Sigmoid colon (tissue), 7 donors: ENCODE measurements at regions of chr4 and their contacts with region 1.

Region 1: DNA sequence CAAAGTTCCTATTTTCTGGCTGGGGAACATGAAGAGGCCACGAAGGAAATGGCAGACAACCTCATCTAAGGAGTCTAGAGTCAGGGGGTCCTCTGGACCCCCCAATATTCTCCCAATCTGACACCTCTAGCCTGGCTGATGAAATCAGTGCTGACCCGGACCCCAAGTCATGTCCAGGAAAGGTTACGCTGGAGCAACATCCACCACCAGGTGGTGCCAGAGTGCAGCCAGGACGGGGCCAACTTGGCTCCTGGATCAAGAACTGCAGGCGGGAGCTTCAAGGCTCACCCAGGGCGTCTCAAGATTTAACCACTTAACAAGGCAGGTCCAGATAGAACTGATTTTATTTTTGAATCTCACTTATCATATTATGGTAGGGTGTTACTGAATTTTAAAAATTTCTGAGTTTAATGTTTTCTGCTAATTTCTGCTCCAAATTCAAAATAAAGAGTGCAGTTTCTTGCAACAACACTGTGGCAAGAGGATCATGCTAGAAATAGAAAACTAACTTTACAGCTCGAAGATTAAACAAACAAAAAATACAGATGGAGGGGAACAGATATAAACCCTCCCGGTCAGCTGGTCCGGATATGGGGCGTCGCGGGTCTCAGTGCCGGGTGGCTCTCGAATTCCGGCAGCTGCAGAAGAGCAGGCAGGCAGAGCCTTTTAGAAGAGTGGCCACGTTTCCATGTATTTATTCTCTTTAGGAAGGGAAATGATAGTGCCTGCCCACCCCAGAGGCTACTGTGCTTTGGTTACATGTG is 135.5 kb downstream of the AFAP1 start:
- DNase-seq: peak; percentile 93
- H3K4me3 ChIP-seq: no peak overlapping the region
- H3K27ac ChIP-seq: peak overlapping the region; percentile 78 to 86 (median 81)
- H3K4me1 ChIP-seq: peaks cover 0 to 52% (median 46%) of the 10 kb centered on the region in 4 donors
- H3K27me3 ChIP-seq: no peaks in the 10 kb centered on the region
- CTCF ChIP-seq: peak; percentile 89 to 99 (median 95)
- EP300 ChIP-seq: no peak
- POLR2A ChIP-seq: no peak

Region 2: GRCh38 chr4:7761720-7762119 is 42.5 kb before region 1 on chr4:
- intact Hi-C with region 1: loop called (anchors 1 kb)
- DNase-seq: peak; percentile 96
- H3K4me3 ChIP-seq: no peak overlapping the region
- H3K27ac ChIP-seq: peak overlapping the region; percentile 64 to 78 (median 70)
- H3K4me1 ChIP-seq: peaks cover 0 to 26% (median 23%) of the 10 kb centered on the region in 4 donors
- H3K27me3 ChIP-seq: no peaks in the 10 kb centered on the region
- CTCF ChIP-seq: peak; percentile 75 to 96 (median 82)
- EP300 ChIP-seq: no peak
- POLR2A ChIP-seq: no peak

Region 3: DNA sequence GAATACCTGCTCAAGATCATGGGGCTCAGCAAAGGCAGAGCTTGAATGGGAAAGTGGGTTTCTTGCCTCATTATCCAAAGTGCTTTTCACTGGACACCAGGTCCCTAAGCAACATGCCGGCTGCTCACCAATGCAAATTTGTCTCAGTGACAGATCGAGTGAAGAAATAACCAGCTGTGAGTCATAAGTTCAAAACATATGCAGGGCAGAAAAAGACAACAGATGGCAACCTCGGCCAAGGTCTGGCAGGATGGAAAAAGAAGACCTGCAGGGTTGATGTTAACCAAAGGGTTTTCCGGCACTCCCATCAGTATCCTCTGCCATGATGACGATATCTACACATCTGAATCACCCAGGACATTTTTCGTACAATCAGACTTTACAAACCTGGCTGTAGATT is 11.4 kb after region 1 on chr4:
- intact Hi-C with region 1: no loop called
- DNase-seq: peak; percentile 69
- H3K4me3 ChIP-seq: no peak overlapping the region
- H3K27ac ChIP-seq: peak overlapping the region; percentile 44 to 86 (median 86)
- H3K4me1 ChIP-seq: peaks cover 0 to 79% (median 65%) of the 10 kb centered on the region in 4 donors
- H3K27me3 ChIP-seq: no peaks in the 10 kb centered on the region
- CTCF ChIP-seq: no peak
- EP300 ChIP-seq: no peak
- POLR2A ChIP-seq: no peak

Region 4: DNA sequence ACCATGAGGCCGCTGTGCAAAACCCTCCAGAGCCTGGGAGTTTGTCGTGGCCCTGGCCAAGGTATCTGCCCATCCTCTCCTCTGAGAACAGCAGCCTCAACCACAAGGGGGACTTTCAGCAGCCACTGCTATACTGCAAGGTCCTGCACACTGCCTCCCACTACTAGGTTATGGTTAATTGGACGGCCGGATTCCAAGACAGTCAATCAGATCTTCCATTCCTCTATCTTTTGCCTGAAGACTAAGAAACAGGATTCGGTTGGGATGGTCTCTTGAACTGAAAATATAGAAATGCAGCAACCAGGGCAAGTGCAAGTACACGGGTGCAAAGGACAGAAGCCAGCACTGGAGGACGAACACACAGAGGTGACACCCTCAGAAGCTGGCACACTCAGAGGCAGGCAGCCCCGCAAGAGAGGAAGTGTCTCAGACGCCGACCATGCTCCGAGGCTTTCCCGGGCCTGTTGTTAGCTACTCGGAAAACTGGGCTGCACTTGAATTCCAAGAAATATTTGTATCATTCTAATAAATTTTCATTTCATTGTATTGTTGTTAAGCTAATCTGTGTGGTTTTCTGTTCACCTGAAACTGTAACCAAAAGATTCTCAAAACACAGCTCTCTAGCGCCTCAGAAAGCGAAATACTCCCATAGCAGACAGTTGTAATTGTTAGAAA is 72.2 kb after region 1 on chr4:
- intact Hi-C with region 1: loop called (anchors 2 kb)
- DNase-seq: peak; percentile 72
- H3K4me3 ChIP-seq: peak overlapping the region in 3 of 4 donors; percentile 3 to 28 (median 18)
- H3K27ac ChIP-seq: peak overlapping the region; percentile 54 to 89 (median 80)
- H3K4me1 ChIP-seq: peaks cover 0 to 88% (median 77%) of the 10 kb centered on the region in 4 donors
- H3K27me3 ChIP-seq: no peaks in the 10 kb centered on the region
- CTCF ChIP-seq: peak in 1 of 4 experiments; percentile 20
- EP300 ChIP-seq: no peak
- POLR2A ChIP-seq: no peak

Region 5: DNA sequence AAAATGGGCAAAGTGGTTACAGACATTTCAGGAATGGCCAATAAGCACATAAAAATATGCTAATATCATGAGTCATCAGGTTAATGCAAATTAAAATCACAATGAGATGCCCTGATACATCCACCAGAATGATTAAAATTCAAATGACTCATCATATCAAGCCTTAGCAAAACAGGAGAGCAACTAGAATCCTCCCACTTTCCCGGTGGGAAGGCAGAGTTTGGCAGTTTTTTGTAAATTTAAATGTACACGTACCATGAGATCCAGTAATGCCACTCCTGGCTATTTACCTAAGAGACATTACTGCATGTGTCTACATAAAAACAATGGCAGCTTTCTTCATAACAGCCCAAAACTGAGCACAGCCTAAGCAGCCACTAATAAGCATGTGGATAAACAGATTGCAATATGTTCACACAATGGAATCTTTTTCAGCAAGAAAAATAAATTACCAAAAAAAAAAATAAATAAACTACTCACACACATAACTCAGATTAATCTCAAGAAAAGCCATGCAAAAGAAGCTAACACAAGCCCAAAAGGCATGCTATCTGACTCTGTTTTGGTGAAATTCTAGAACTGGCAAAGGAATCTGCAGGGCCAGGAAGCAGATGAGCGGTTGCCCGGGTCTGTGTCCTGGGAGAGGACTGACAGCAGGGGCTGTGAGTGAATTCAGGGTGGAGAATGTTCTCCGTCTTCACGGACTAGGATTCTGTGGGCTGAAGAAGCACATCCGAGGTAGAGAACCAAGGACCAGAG is 86.6 kb after region 1 on chr4:
- intact Hi-C with region 1: no loop called
- DNase-seq: no peak
- H3K4me3 ChIP-seq: no peak overlapping the region
- H3K27ac ChIP-seq: peak overlapping the region; percentile 44 to 85 (median 69)
- H3K4me1 ChIP-seq: peaks cover 0 to 84% (median 65%) of the 10 kb centered on the region in 4 donors
- H3K27me3 ChIP-seq: no peaks in the 10 kb centered on the region
- CTCF ChIP-seq: no peak
- EP300 ChIP-seq: no peak
- POLR2A ChIP-seq: no peak

Region 6: DNA sequence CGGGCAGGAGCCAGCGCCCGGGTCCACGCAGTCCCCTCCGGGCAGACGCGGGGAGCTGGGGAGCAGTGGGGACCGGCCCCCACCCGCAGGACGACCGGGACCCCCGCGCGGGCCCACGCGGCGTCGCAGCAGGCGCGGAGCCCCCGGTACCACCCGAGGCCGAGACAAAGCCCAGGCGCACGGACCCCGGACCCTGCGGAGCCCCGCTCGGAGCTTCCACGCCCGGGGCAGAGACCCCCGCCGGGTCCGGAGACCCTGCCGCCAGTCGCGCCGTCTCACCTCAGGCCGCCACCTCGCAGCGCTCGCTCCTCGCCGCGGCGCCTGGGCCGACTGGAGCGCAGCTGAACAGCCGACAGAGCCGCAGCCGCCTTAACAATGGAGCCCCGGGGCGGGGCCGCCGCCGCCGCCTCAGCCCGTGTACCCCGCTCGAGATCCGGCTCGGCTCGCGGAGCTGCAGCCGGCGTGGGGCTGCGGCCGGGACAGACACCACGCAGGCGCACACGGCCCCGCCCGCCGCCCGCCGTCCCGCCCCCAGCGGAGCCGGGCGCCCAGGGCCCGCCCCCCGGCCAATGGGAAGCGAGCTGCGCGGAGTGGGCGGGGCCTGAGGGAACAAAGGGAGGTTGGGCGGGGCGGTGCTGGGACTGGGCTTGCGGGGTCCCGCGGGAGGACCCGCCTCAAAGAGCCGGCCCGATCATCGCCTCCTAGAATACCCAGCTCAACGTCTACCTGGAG is 135.4 kb after region 1 on chr4 and contains the start of gene AFAP1:
- intact Hi-C with region 1: loop called (anchors 2 kb)
- DNase-seq: peak; percentile 94
- H3K4me3 ChIP-seq: peak within 1 kb of the TSS; percentile 87 to 100 (median 93)
- H3K27ac ChIP-seq: peak within 1 kb of the TSS; percentile 97 to 100 (median 99)
- H3K4me1 ChIP-seq: peaks cover 0 to 42% (median 40%) of the 10 kb centered on the region in 4 donors
- H3K27me3 ChIP-seq: no peaks in the 10 kb centered on the region
- CTCF ChIP-seq: no peak
- EP300 ChIP-seq: no peak
- POLR2A ChIP-seq: peak; percentile 19 to 79
- total RNA-seq, gene AFAP1: 24.0 to 51.3 (median 38.2) TPM

Region 7: DNA sequence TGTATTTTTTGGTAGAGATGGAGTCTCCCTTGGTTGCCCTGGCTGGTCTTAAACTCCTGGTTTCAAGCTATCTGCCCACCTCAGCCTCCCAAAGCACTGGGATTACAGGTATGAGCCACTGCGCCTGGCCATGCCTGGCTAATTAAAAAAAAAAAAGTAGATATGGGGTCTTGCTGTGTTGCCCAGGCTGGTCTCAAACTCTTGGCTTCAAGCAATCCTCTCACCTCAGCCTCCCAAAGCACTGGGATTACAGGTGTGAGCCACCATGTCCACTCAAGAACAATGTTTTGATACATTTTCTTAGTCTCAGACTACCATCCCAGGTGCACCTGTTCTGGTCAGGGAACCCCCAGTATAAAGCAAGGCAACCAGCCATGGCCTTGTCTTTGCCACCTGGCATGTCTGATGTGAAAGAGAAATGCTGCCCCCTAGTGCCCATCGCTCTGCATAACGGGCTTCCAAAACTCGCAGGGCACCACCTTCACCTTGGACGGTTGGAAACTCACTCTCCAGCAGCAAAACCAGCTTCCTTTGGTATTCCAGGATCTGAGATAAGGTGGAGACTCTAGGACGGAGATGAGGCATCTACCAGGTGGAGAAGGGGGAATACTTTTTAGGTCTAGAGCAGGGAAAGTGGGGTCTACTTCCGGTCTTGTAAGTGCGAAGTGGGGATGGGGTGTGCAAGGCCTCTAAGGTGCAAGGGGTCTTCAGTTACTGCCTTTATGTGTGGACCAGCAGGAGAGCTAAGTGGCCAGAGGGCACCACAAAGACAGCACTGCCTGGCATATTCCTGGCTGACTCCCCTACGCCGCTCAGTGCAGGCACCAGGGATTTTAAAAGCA is 183.2 kb after region 1 on chr4:
- intact Hi-C with region 1: loop called (anchors 1 kb)
- DNase-seq: peak; percentile 82
- H3K4me3 ChIP-seq: no peak overlapping the region
- H3K27ac ChIP-seq: no peak overlapping the region
- H3K4me1 ChIP-seq: peaks cover 0 to 4% (median 0%) of the 10 kb centered on the region in 4 donors
- H3K27me3 ChIP-seq: no peaks in the 10 kb centered on the region
- CTCF ChIP-seq: peak; percentile 66 to 88 (median 86)
- EP300 ChIP-seq: no peak
- POLR2A ChIP-seq: no peak